CD8-positive, alpha-beta memory T cell (primary cell): ENCODE measurements at regions of chr12 and their contacts with region 1.

Region 1: DNA sequence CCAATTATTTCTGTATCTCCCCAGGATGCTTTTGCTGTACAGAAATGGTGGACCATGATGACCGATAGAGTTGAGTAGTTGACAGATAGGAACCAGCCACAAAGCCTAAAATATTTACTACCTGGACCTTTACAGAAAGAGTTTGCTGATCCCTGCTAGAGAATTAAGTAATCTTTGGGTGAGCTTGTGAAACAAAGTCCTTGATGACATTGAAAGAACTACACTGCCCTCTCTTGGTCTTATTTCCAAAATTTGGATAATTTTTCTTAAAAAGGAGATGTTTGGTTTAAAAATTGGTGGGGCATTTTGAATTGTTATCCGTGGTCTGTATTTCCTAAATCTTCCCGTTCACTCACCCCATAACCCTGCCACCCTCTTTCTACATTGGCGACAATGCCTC is 13.7 kb upstream of the TCTN1 start:
- DNase-seq: peak in 2 of 5 donors; percentile 33 to 51
- H3K4me3 ChIP-seq: no peak overlapping the region
- H3K4me3 Mint-ChIP-seq: no peak overlapping the region
- H3K27ac ChIP-seq: no peak overlapping the region
- H3K27ac Mint-ChIP-seq: peak overlapping the region in 1 of 8 donors; percentile 1
- H3K4me1 ChIP-seq: no peaks in the 10 kb centered on the region
- H3K4me1 Mint-ChIP-seq: peaks cover 2 to 6% (median 5%) of the 10 kb centered on the region in 3 donors
- H3K27me3 ChIP-seq: no peaks in the 10 kb centered on the region
- H3K27me3 Mint-ChIP-seq: no peaks in the 10 kb centered on the region

Region 2: GRCh38 chr12:110449799-110450497 is 150.3 kb before region 1 on chr12 and contains the start of gene ARPC3:
- CTCF ChIA-PET with region 1: interaction called, 119 read pairs
- POLR2A ChIA-PET with region 1: interaction called, 27 read pairs
- DNase-seq: peak; percentile 93 to 96 (median 93)
- H3K4me3 ChIP-seq: peak within 1 kb of the TSS; percentile 67
- H3K4me3 Mint-ChIP-seq: peak within 1 kb of the TSS; percentile 94 to 100 (median 99)
- H3K27ac ChIP-seq: peak within 1 kb of the TSS; percentile 88
- H3K27ac Mint-ChIP-seq: peak within 1 kb of the TSS; percentile 86 to 100 (median 99)
- H3K4me1 ChIP-seq: peaks cover 14% of the 10 kb centered on the region
- H3K4me1 Mint-ChIP-seq: peaks cover 33 to 50% (median 46%) of the 10 kb centered on the region in 3 donors
- H3K27me3 ChIP-seq: no peaks in the 10 kb centered on the region
- H3K27me3 Mint-ChIP-seq: peaks cover 0 to 4% of the 10 kb centered on the region in 2 donors
- total RNA-seq, gene ARPC3: 266 to 293 TPM

Region 3: GRCh38 chr12:110513842-110514241 is 86.4 kb before region 1 on chr12:
- CTCF ChIA-PET with region 1: interaction called, 64 read pairs
- POLR2A ChIA-PET with region 1: no interaction called
- DNase-seq: no peak
- H3K4me3 ChIP-seq: no peak overlapping the region
- H3K4me3 Mint-ChIP-seq: no peak overlapping the region
- H3K27ac ChIP-seq: no peak overlapping the region
- H3K27ac Mint-ChIP-seq: peak overlapping the region in 1 of 8 donors; percentile 73
- H3K4me1 ChIP-seq: no peaks in the 10 kb centered on the region
- H3K4me1 Mint-ChIP-seq: no peaks in the 10 kb centered on the region
- H3K27me3 ChIP-seq: no peaks in the 10 kb centered on the region
- H3K27me3 Mint-ChIP-seq: no peaks in the 10 kb centered on the region

Region 4: DNA sequence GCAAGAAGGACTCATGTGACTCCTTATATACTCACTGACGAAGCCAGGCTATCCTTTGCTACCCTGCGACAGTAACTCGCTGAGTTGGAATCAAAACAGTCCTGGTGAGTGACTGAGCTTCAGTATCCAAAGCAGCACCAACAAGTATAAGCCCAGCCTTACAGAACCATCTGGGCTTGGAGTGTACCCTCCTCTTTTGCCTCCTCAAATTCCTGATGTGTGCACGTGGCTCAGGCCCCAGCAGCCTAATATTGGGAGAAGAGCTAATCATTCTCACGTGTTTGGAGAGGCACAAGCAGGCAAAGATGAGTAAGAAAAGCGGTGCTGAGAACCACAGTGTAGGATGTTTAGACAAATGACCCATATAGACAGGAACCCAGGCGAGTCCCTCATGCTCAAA is 51.6 kb before region 1 on chr12:
- CTCF ChIA-PET with region 1: interaction called, 154 read pairs
- POLR2A ChIA-PET with region 1: interaction called, 4 read pairs
- DNase-seq: no peak
- H3K4me3 ChIP-seq: no peak overlapping the region
- H3K4me3 Mint-ChIP-seq: no peak overlapping the region
- H3K27ac ChIP-seq: no peak overlapping the region
- H3K27ac Mint-ChIP-seq: peak overlapping the region in 2 of 8 donors; percentile 31 to 88
- H3K4me1 ChIP-seq: no peaks in the 10 kb centered on the region
- H3K4me1 Mint-ChIP-seq: peaks cover 25 to 54% (median 40%) of the 10 kb centered on the region in 3 donors
- H3K27me3 ChIP-seq: no peaks in the 10 kb centered on the region
- H3K27me3 Mint-ChIP-seq: no peaks in the 10 kb centered on the region

Region 5: GRCh38 chr12:110575326-110575725 is 24.9 kb before region 1 on chr12:
- CTCF ChIA-PET with region 1: interaction called, 16 read pairs
- POLR2A ChIA-PET with region 1: interaction called, 5 read pairs
- DNase-seq: no peak
- H3K4me3 ChIP-seq: no peak overlapping the region
- H3K4me3 Mint-ChIP-seq: peak overlapping the region in 3 of 7 donors; percentile 18 to 61 (median 43)
- H3K27ac ChIP-seq: no peak overlapping the region
- H3K27ac Mint-ChIP-seq: peak overlapping the region in 4 of 8 donors; percentile 41 to 92 (median 71)
- H3K4me1 ChIP-seq: peaks cover 56% of the 10 kb centered on the region
- H3K4me1 Mint-ChIP-seq: peaks cover 58 to 74% (median 69%) of the 10 kb centered on the region in 3 donors
- H3K27me3 ChIP-seq: no peaks in the 10 kb centered on the region
- H3K27me3 Mint-ChIP-seq: no peaks in the 10 kb centered on the region

Region 6: DNA sequence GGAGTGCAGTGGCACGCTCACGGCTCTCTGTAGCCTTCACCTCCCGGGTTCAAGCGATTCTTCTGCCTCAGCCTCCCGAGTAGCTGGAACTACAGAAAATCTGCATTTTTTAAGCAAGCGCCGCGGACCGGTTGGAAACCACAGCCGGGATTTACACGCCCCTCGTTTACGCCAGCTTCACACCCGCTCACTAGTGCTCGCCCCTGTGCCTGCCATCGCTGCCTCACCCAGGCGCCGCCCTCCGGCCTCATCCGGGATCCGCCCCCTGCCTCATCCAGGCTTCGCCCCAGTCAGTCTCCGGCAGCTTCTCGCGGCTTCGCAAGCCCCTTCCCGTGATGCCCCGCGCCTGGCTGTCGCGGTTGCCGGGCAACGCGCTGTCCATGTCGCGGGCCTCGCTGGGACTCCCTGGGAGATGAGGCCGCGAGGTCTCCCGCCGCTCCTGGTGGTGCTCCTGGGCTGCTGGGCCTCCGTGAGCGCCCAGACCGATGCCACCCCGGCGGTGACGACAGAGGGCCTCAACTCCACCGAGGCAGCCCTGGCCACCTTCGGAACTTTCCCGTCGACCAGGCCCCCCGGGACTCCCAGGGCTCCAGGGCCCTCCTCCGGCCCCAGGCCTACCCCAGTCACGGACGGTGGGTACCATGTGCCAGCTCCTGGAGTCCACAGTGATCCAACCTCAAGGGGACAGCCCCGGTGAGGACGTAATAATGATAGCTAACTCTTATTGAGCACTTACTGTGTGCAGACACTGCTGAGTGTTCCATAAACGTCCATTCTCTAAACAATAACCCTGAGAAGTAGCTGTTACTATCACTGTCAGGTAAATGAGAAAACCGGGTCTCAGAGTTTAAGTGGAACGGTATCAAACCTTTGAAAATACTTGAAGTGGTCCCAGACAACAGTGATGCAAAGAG is 13.8 kb after region 1 on chr12 and contains the start of gene TCTN1:
- CTCF ChIA-PET with region 1: interaction called, 45 read pairs
- POLR2A ChIA-PET with region 1: interaction called, 6 read pairs
- DNase-seq: peak; percentile 92 to 97 (median 94)
- H3K4me3 ChIP-seq: peak within 1 kb of the TSS; percentile 66
- H3K4me3 Mint-ChIP-seq: peak within 1 kb of the TSS; percentile 86 to 96 (median 89)
- H3K27ac ChIP-seq: peak within 1 kb of the TSS; percentile 83
- H3K27ac Mint-ChIP-seq: peak within 1 kb of the TSS; percentile 59 to 98 (median 86)
- H3K4me1 ChIP-seq: peaks cover 10% of the 10 kb centered on the region
- H3K4me1 Mint-ChIP-seq: peaks cover 3 to 11% (median 9%) of the 10 kb centered on the region in 3 donors
- H3K27me3 ChIP-seq: no peaks in the 10 kb centered on the region
- H3K27me3 Mint-ChIP-seq: no peaks in the 10 kb centered on the region
- total RNA-seq, gene TCTN1: 9.8 to 11.1 TPM